Activated B cell treated with CpG ODN at 0.5 μM for 24 hours (primary cell): ENCODE measurements at regions of chr6 and their contacts with region 1.

Region 1: GRCh38 chr6:167103041-167103891 is 19.6 kb upstream of the CCR6 start:
- DNase-seq: no peak
- ATAC-seq: peak; percentile 67
- H3K4me3 Mint-ChIP-seq: peak overlapping the region; percentile 58
- H3K27ac Mint-ChIP-seq: peak overlapping the region; percentile 98
- H3K4me1 Mint-ChIP-seq: peaks cover 96% of the 10 kb centered on the region
- H3K27me3 Mint-ChIP-seq: no peaks in the 10 kb centered on the region
- CTCF ChIP-seq: no peak

Region 2: DNA sequence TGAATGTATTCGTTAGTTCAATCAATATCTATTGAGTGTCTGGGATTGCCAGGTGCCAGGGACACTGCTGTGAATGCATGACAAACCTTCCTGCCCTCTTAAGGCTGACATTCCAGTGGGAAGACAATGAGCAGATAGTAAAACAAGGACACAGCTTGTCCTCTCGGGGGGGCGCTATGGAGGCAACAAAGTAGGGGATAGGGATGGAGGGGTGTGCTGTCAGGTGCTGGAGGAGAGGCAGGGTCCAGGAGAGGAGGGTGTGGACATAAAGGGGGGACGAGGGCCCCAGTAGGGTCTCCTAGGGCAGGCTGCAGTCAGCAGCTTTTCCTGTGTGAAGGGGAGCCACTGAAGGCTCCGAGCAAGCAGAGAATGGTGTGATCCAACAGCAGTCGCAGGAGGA is 1242.0 kb before region 1 on chr6:
- CTCF ChIA-PET with region 1: no interaction called
- POLR2A ChIA-PET with region 1: no interaction called
- intact Hi-C with region 1: no loop called
- DNase-seq: no peak
- ATAC-seq: no peak
- H3K4me3 Mint-ChIP-seq: no peak overlapping the region
- H3K27ac Mint-ChIP-seq: no peak overlapping the region
- H3K4me1 Mint-ChIP-seq: no peaks in the 10 kb centered on the region
- H3K27me3 Mint-ChIP-seq: peaks cover 11% of the 10 kb centered on the region
- CTCF ChIP-seq: no peak

Region 3: DNA sequence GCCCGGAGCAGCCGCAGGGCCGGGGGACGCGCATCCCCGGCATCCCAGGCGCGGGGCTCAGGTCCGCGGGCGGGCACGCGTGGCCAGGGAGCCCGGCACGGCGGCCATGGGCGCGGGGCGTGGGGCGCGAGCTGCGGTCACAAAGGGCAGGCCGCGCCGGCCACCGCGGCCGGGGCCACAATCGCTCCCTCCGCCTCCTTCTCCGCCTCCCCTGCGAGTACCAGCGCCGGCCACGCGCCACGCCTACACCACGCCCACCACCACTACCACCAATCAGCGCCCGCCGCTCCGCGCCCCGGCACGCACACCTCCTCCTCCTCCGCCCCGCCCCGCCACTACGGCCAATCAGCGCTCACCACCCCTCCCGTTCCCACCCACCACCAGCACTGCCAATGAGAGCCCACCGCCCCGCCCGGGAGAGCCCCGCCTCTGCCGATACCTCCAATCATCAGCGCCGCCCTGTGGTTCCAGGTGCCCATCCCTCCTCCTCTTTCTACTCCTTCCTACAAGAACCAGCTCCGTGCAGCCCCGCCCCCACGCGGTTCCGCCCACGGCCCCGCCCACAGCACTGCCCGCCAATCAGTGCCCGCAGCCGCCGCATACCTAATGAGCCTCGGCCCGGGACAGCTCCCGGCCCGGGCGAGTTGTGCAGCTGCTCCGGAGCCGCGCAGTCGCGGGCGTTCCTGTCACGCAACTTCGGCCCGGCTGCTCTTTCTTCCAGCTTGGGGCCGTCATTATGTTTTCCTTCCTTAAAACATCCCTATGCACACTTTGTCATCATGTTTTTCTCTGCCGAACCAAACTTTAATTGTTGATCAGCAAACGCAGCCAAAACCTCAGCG is 476.0 kb before region 1 on chr6 and contains the start of gene RPS6KA2:
- CTCF ChIA-PET with region 1: no interaction called
- POLR2A ChIA-PET with region 1: no interaction called
- intact Hi-C with region 1: no loop called
- DNase-seq: peak; percentile 100
- ATAC-seq: peak; percentile 93
- H3K4me3 Mint-ChIP-seq: peak within 1 kb of the TSS; percentile 91
- H3K27ac Mint-ChIP-seq: peak within 1 kb of the TSS; percentile 91
- H3K4me1 Mint-ChIP-seq: peaks cover 22% of the 10 kb centered on the region
- H3K27me3 Mint-ChIP-seq: peaks cover 32% of the 10 kb centered on the region
- CTCF ChIP-seq: no peak
- total RNA-seq, gene RPS6KA2: 13.9 and 14.4 TPM in 2 replicates

Region 4: GRCh38 chr6:166862287-166862977 is 240.8 kb before region 1 on chr6:
- CTCF ChIA-PET with region 1: no interaction called
- POLR2A ChIA-PET with region 1: no interaction called
- intact Hi-C with region 1: no loop called
- DNase-seq: peak; percentile 28
- ATAC-seq: peak; percentile 74
- H3K4me3 Mint-ChIP-seq: peak overlapping the region; percentile 82
- H3K27ac Mint-ChIP-seq: no peak overlapping the region
- H3K4me1 Mint-ChIP-seq: peaks cover 6% of the 10 kb centered on the region
- H3K27me3 Mint-ChIP-seq: peaks cover 13% of the 10 kb centered on the region
- CTCF ChIP-seq: no peak

Region 5: DNA sequence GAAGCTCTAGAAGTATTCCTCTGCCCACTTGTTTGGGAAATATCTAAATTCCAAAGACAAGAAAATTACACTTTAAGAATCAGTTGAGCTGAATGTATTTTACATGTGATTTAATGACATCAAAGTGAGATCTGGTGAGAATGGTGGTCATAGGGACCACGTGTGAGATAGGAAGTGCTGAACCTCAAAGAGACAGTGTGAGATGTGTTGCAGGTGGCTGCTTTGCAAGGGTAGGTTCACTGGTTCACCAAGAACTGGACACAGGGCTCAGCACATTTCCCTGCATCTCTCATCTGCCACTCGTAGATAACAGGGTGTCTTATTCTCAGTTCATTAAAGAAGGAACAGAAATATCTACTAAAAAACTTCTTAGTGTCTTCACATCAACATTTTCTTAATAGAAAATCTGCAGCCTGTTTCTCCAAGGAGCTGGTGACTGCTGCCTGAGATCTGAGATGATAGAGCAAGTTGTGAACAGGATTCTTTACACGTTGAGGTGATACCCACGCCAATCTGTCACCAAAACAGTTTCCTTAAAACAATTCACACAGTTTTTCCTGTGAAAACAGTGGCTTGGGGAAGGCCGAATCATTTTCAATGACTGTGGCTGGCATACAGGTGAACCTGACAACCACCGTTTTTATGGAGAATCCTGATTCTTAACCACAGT is 26.9 kb after region 1 on chr6:
- CTCF ChIA-PET with region 1: no interaction called
- POLR2A ChIA-PET with region 1: interaction called, 84 read pairs
- intact Hi-C with region 1: loop called (anchors 1 kb)
- DNase-seq: no peak
- ATAC-seq: peak; percentile 18
- H3K4me3 Mint-ChIP-seq: peak overlapping the region; percentile 55
- H3K27ac Mint-ChIP-seq: peak overlapping the region; percentile 95
- H3K4me1 Mint-ChIP-seq: peaks cover 91% of the 10 kb centered on the region
- H3K27me3 Mint-ChIP-seq: no peaks in the 10 kb centered on the region
- CTCF ChIP-seq: no peak

Region 6: GRCh38 chr6:167350731-167351655 is 247.7 kb after region 1 on chr6:
- CTCF ChIA-PET with region 1: no interaction called
- POLR2A ChIA-PET with region 1: no interaction called
- intact Hi-C with region 1: no loop called
- DNase-seq: peak; percentile 77
- ATAC-seq: peak; percentile 77
- H3K4me3 Mint-ChIP-seq: peak overlapping the region; percentile 89
- H3K27ac Mint-ChIP-seq: peak overlapping the region; percentile 74
- H3K4me1 Mint-ChIP-seq: peaks cover 24% of the 10 kb centered on the region
- H3K27me3 Mint-ChIP-seq: peaks cover 21% of the 10 kb centered on the region
- CTCF ChIP-seq: peak; percentile 43